IMR-90 (cell line): ENCODE measurements at regions of chr6 and their contacts with region 1.

Region 1: DNA sequence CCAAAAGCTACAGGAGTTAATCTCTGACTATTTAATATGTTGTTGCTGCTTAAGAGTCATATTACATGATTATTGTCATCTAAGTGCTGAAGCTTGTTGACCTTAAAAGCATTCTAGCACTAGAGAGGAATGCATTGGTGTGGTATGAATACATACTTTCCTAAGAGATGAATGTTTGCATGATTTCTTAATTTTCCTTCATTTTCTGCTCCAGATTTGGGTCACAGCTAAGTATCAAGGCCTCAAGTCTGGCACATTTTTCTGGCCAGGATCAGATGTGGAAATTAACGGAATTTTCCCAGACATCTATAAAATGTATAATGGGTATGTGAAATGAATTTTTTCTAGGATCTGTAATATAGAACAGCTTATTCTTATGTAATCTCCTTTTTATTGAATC is 53.6 kb downstream of the ENPP1 start:
- DNase-seq: peak; percentile 64
- ATAC-seq: peak; percentile 45
- H3K4me3 ChIP-seq: no peak overlapping the region
- H3K27ac ChIP-seq: peak overlapping the region; percentile 16; the same call in 1 of the 2 replicates
- H3K4me1 ChIP-seq: peaks cover 6% of the 10 kb centered on the region; the same call in 1 of the 2 replicates
- H3K27me3 ChIP-seq: no peaks in the 10 kb centered on the region
- CTCF ChIP-seq: no peak
- POLR2A ChIP-seq: no peak
- RAD21 ChIP-seq: no peak

Region 2: GRCh38 chr6:131819572-131820124 is 41.7 kb before region 1 on chr6:
- CTCF ChIA-PET with region 1: no interaction called
- POLR2A ChIA-PET with region 1: no interaction called
- dilution Hi-C with region 1: no loop called
- in situ Hi-C with region 1: no loop called
- intact Hi-C with region 1: loop called (anchors 5 kb)
- DNase-seq: peak; percentile 94
- ATAC-seq: peak; percentile 67
- H3K4me3 ChIP-seq: no peak overlapping the region
- H3K27ac ChIP-seq: no peak overlapping the region
- H3K4me1 ChIP-seq: peaks cover 4% of the 10 kb centered on the region
- H3K27me3 ChIP-seq: no peaks in the 10 kb centered on the region
- CTCF ChIP-seq: no peak
- POLR2A ChIP-seq: no peak
- RAD21 ChIP-seq: no peak

Region 3: DNA sequence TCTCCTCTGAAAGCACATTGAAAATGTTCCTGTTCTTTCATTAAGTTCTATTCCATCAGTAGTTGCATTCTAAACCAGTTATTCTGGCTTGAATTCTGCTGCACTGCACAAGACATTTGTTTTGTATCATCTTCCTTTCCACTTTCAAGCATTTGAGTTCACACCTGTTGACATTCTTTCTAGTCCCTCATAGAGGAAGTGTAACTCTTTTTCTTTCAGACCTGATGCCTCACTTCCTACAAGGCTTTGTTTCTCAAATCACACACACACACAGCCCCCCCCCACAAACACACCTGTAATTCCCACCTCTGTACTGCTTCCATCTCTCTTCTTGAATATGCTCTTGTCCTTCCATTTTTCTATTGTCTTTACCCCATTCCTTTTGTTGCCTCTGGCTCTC is 38.9 kb after region 1 on chr6:
- CTCF ChIA-PET with region 1: no interaction called
- POLR2A ChIA-PET with region 1: no interaction called
- dilution Hi-C with region 1: no loop called
- in situ Hi-C with region 1: no loop called
- intact Hi-C with region 1: no loop called
- DNase-seq: no peak
- ATAC-seq: no peak
- H3K4me3 ChIP-seq: no peak overlapping the region
- H3K27ac ChIP-seq: no peak overlapping the region
- H3K4me1 ChIP-seq: no peaks in the 10 kb centered on the region
- H3K27me3 ChIP-seq: no peaks in the 10 kb centered on the region; the same call in 1 of the 2 replicates
- CTCF ChIP-seq: no peak
- POLR2A ChIP-seq: no peak
- RAD21 ChIP-seq: no peak